ENCODE measurements at regions of chr3 and their contacts with region 1.

Region 1: GRCh38 chr3:16290007-16290826 is 25.2 kb downstream of the OXNAD1 start:
- DNase-seq: peak; percentile 48 to 64 (median 55)
- ATAC-seq: peak; percentile 83
- H3K4me3 ChIP-seq: no peak overlapping the region
- H3K27ac ChIP-seq: no peak overlapping the region
- H3K4me1 ChIP-seq: peaks cover 2 to 41% of the 10 kb centered on the region in 2 experiments; a peak in 4 of 5 replicates
- H3K27me3 ChIP-seq: no peaks in the 10 kb centered on the region
- CTCF ChIP-seq: peak; percentile 68 to 92 (median 77)
- EP300 ChIP-seq: no peak
- POLR2A ChIP-seq: no peak
- RAD21 ChIP-seq: peak; percentile 96 to 97

Region 2: GRCh38 chr3:15997274-15997943 is 292.8 kb before region 1 on chr3:
- CTCF ChIA-PET with region 1: no interaction called
- POLR2A ChIA-PET with region 1: no interaction called
- in situ Hi-C with region 1: no loop called
- intact Hi-C with region 1: no loop called
- DNase-seq: no peak
- ATAC-seq: no peak
- H3K4me3 ChIP-seq: no peak overlapping the region
- H3K27ac ChIP-seq: no peak overlapping the region
- H3K4me1 ChIP-seq: no peaks in the 10 kb centered on the region
- H3K27me3 ChIP-seq: peaks cover 0 to 10% of the 10 kb centered on the region in 2 experiments; a peak in 2 of 5 replicates
- CTCF ChIP-seq: no peak
- EP300 ChIP-seq: no peak
- POLR2A ChIP-seq: no peak
- RAD21 ChIP-seq: no peak

Region 3: GRCh38 chr3:16305111-16305541 is 14.9 kb after region 1 on chr3:
- CTCF ChIA-PET with region 1: no interaction called
- POLR2A ChIA-PET with region 1: interaction called, 15 read pairs
- in situ Hi-C with region 1: no loop called
- intact Hi-C with region 1: loop called (anchors 1 kb)
- DNase-seq: peak in 2 of 4 experiments; percentile 46 to 51
- ATAC-seq: peak; percentile 32
- H3K4me3 ChIP-seq: no peak overlapping the region
- H3K27ac ChIP-seq: peak overlapping the region; percentile 45; the same call in 2 of the 3 replicates
- H3K4me1 ChIP-seq: peaks cover 11 to 58% of the 10 kb centered on the region in 2 experiments
- H3K27me3 ChIP-seq: no peaks in the 10 kb centered on the region
- CTCF ChIP-seq: no peak
- EP300 ChIP-seq: no peak
- POLR2A ChIP-seq: no peak
- RAD21 ChIP-seq: no peak

Region 4: GRCh38 chr3:16319307-16319706 is 29.1 kb after region 1 on chr3:
- CTCF ChIA-PET with region 1: interaction called, 24 read pairs
- POLR2A ChIA-PET with region 1: interaction called, 4 read pairs
- in situ Hi-C with region 1: no loop called
- intact Hi-C with region 1: loop called (anchors 1 kb)
- DNase-seq: peak; percentile 84 to 87 (median 84)
- ATAC-seq: peak; percentile 97
- H3K4me3 ChIP-seq: no peak overlapping the region
- H3K27ac ChIP-seq: peak overlapping the region; percentile 57; the same call in 2 of the 3 replicates
- H3K4me1 ChIP-seq: peaks cover 0 to 12% of the 10 kb centered on the region in 2 experiments; a peak in 2 of 5 replicates
- H3K27me3 ChIP-seq: no peaks in the 10 kb centered on the region
- CTCF ChIP-seq: peak; percentile 75 to 85 (median 77)
- EP300 ChIP-seq: no peak
- POLR2A ChIP-seq: no peak
- RAD21 ChIP-seq: peak; percentile 83 to 90